Heart left ventricle (tissue), 16 donors: ENCODE measurements at regions of chr2 and their contacts with region 1.

Region 1: GRCh38 chr2:85132834-85133637 is at the start of gene TCF7L1:
- DNase-seq: peak; percentile 82 to 91 (median 88)
- ATAC-seq: peak; percentile 95 to 97 (median 96)
- H3K4me3 ChIP-seq: peak within 1 kb of the TSS; percentile 61 to 99 (median 82)
- H3K27ac ChIP-seq: peak within 1 kb of the TSS; percentile 38 to 90 (median 81)
- H3K4me1 ChIP-seq: peaks cover 4 to 51% (median 31%) of the 10 kb centered on the region in 12 donors
- H3K27me3 ChIP-seq: peaks cover 0 to 26% (median 0%) of the 10 kb centered on the region in 9 donors
- CTCF ChIP-seq: peak; percentile 78 to 95 (median 89)
- POLR2A ChIP-seq: no peak
- total RNA-seq, gene TCF7L1: 1.9 to 9.8 (median 6.4) TPM

Region 2: GRCh38 chr2:85066874-85067351 is 66.1 kb before region 1 on chr2:
- intact Hi-C with region 1: loop called in 6 of 10 experiments (anchors 2 to 5 kb)
- DNase-seq: peak; percentile 71 to 83 (median 75)
- ATAC-seq: peak; percentile 78 to 88 (median 85)
- H3K4me3 ChIP-seq: peak overlapping the region in 11 of 12 donors; percentile 2 to 59 (median 43)
- H3K27ac ChIP-seq: peak overlapping the region in 3 of 12 donors; percentile 2 to 50 (median 23)
- H3K4me1 ChIP-seq: peaks cover 0 to 9% (median 6%) of the 10 kb centered on the region in 12 donors
- H3K27me3 ChIP-seq: peaks cover 0 to 10% (median 0%) of the 10 kb centered on the region in 9 donors
- CTCF ChIP-seq: peak; percentile 71 to 91 (median 86)
- POLR2A ChIP-seq: no peak

Region 3: GRCh38 chr2:85173909-85174308 is 40.9 kb after region 1 on chr2:
- intact Hi-C with region 1: loop called in 1 of 10 experiments (anchors 5 kb)
- DNase-seq: peak in 1 of 5 donors; percentile 52
- ATAC-seq: peak in 3 of 4 donors; percentile 33 to 69 (median 41)
- H3K4me3 ChIP-seq: no peak overlapping the region
- H3K27ac ChIP-seq: peak overlapping the region in 3 of 12 donors; percentile 22 to 58 (median 27)
- H3K4me1 ChIP-seq: peaks cover 12 to 42% (median 32%) of the 10 kb centered on the region in 12 donors
- H3K27me3 ChIP-seq: no peaks in the 10 kb centered on the region
- CTCF ChIP-seq: no peak
- POLR2A ChIP-seq: no peak

Region 4: DNA sequence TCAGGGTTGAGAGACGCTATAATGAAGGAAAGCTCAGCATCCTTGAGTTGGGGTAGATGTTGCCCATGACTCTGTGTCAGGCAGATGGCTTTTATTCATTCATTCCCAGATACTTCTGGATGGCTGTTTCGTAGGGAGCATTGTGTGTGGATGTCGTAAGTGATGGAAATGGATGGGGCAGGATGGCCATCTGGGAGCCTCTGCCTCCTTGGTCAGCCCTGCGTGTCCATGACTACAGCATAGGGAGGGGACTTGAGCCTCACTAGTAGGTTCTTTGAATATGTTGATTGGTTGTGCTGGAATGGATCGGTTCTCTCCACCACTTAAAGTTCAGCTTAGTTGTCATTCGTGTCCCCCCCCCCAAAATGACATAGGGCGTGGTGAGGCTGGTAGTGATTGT is 149.9 kb after region 1 on chr2:
- intact Hi-C with region 1: loop called (anchors 1 to 5 kb)
- DNase-seq: no peak
- ATAC-seq: no peak
- H3K4me3 ChIP-seq: no peak overlapping the region
- H3K27ac ChIP-seq: no peak overlapping the region
- H3K4me1 ChIP-seq: peaks cover 0 to 24% (median 16%) of the 10 kb centered on the region in 12 donors
- H3K27me3 ChIP-seq: no peaks in the 10 kb centered on the region
- CTCF ChIP-seq: no peak
- POLR2A ChIP-seq: no peak

Region 5: GRCh38 chr2:85302121-85302520 is 169.1 kb after region 1 on chr2:
- intact Hi-C with region 1: loop called in 2 of 10 experiments (anchors 1 kb)
- DNase-seq: no peak
- ATAC-seq: peak in 2 of 4 donors; percentile 32 to 45
- H3K4me3 ChIP-seq: no peak overlapping the region
- H3K27ac ChIP-seq: no peak overlapping the region
- H3K4me1 ChIP-seq: peaks cover 0 to 10% (median 2%) of the 10 kb centered on the region in 12 donors
- H3K27me3 ChIP-seq: no peaks in the 10 kb centered on the region
- CTCF ChIP-seq: no peak
- POLR2A ChIP-seq: no peak